ENCODE measurements at regions of chr20 and their contacts with region 1.

Region 1: GRCh38 chr20:34473262-34473883 is 42.8 kb upstream of the DYNLRB1 start:
- DNase-seq: no peak
- ATAC-seq: peak in 1 of 2 donors; percentile 63
- H3K4me3 ChIP-seq: no peak overlapping the region
- H3K27ac ChIP-seq: no peak overlapping the region
- H3K4me1 ChIP-seq: peaks cover 12% of the 10 kb centered on the region
- H3K27me3 ChIP-seq: no peaks in the 10 kb centered on the region
- CTCF ChIP-seq: peak; percentile 20

Region 2: DNA sequence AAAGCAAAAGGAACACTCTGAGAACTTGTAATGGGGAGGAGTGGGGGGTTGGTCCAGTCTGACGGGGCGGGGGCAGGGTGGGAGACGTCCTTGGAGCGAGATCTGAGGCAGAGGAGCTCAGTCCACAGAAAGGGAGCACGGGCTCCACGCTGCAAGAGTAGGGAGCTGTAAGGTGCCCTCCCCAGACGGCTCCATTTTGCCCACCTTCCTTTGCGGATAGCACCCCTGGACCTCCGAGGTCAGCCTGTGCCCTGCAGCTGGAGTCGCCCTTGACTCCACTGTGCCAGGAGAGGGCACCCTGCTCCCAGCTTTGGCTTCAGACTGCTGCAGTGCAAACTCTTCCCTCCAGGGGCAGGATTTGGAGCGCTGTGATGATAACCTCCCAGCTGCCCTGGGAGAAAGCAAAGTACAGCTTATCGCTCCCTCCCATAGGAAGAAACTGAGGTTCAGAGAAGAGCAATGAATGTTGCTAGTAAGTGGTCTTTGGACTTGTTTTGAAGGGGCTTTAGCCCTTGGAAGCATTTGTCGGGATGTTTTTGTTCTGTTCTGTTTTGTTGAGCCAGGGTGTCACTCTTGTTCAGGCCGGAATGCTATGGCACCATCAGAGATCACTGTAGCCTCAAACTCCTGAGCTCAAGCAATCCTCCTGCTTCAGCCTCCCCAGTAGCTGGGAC is 160.7 kb before region 1 on chr20:
- intact Hi-C with region 1: loop called (anchors 10 kb)
- DNase-seq: peak; percentile 86
- ATAC-seq: peak; percentile 98 to 99
- H3K4me3 ChIP-seq: peak overlapping the region; percentile 27
- H3K27ac ChIP-seq: no peak overlapping the region
- H3K4me1 ChIP-seq: peaks cover 21% of the 10 kb centered on the region
- H3K27me3 ChIP-seq: peaks cover 20% of the 10 kb centered on the region
- CTCF ChIP-seq: peak; percentile 99

Region 3: DNA sequence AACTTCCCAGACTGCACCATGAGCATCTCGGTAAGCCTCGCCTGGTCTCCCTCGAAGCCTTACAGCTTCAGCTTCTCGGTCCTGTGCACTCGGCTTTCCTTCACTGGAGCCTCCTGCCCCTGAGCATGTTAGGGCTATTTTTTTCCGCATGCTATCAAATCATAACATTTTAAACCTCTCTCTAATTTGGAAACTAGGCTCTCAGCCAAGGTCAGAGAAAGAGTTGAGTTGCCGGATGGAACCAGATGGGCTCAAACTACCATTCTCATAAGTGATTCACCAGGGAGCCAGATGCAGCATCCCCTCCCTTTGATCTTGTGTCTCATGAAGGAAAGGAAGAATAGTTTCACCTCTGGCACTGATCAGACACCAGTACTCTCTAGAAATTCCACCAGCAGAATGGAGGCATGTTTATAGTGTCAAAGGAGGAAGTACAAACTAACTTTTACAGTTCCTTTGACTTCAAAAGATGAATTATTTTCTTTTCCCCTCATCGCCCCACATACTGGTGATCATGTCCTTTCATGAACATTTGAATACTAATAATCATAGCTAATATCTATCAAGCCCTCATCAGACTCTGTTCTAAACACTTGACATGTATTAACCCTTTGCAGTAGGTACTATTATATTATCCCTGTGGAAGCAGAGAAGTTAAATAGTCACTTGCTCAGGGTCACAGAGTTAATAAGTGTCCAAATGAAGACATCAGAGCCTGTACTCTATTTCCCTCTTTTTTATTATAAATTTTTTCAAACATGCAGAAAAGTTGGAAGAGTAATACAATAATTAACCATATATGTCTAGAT is 131.8 kb after region 1 on chr20:
- intact Hi-C with region 1: no loop called
- DNase-seq: no peak
- ATAC-seq: no peak
- H3K4me3 ChIP-seq: no peak overlapping the region
- H3K27ac ChIP-seq: no peak overlapping the region
- H3K4me1 ChIP-seq: no peaks in the 10 kb centered on the region
- H3K27me3 ChIP-seq: no peaks in the 10 kb centered on the region
- CTCF ChIP-seq: no peak